ENCODE measurements at regions of chr1 and their contacts with region 1.

Region 1: GRCh38 chr1:58783993-58784757 is at the start of gene JUN:
- DNase-seq: peak; percentile 99
- H3K4me3 Mint-ChIP-seq: peak within 1 kb of the TSS; percentile 91
- H3K27ac Mint-ChIP-seq: peak within 1 kb of the TSS; percentile 98
- H3K4me1 Mint-ChIP-seq: peaks cover 21% of the 10 kb centered on the region
- H3K27me3 Mint-ChIP-seq: no peaks in the 10 kb centered on the region
- CTCF ChIP-seq: no peak
- total RNA-seq, gene JUN: 60.6 and 71.5 TPM in 2 replicates

Region 2: GRCh38 chr1:58539553-58539952 is 244.6 kb before region 1 on chr1:
- CTCF ChIA-PET with region 1: no interaction called
- POLR2A ChIA-PET with region 1: no interaction called
- intact Hi-C with region 1: no loop called
- DNase-seq: no peak
- H3K4me3 Mint-ChIP-seq: no peak overlapping the region
- H3K27ac Mint-ChIP-seq: no peak overlapping the region
- H3K4me1 Mint-ChIP-seq: no peaks in the 10 kb centered on the region
- H3K27me3 Mint-ChIP-seq: no peaks in the 10 kb centered on the region
- CTCF ChIP-seq: no peak

Region 3: DNA sequence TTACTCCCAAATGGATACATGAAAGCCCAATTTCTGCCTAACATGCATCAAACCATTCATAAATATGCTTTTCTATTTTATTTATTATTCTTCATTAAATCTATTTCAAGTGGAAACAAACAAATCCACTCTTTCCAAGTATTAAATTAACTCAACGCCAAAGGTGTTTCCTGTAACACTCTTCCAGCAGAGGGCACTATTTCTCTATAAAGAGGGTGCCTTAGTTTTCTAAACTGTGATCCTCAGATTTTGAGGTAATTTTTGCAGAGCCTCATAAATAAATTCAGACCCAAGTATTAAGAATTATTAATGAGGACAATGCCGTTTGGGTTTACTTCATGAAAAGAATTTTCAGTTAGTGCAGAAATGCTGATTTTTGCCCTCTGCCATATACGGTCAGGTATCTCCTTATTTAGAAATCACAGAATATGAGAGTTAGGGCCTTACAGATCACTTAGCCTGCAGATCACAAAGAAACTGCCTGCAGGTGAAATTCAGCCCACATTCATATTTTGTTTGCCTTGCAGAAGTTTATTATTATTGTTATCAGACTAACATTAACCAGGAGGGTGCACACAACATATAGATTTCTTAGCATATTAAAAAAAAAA is 44.2 kb before region 1 on chr1:
- CTCF ChIA-PET with region 1: interaction called, 7 read pairs
- POLR2A ChIA-PET with region 1: interaction called, 5 read pairs
- intact Hi-C with region 1: loop called (anchors 1 kb)
- DNase-seq: peak; percentile 69
- H3K4me3 Mint-ChIP-seq: no peak overlapping the region
- H3K27ac Mint-ChIP-seq: no peak overlapping the region
- H3K4me1 Mint-ChIP-seq: peaks cover 6% of the 10 kb centered on the region
- H3K27me3 Mint-ChIP-seq: no peaks in the 10 kb centered on the region
- CTCF ChIP-seq: peak; percentile 54

Region 4: DNA sequence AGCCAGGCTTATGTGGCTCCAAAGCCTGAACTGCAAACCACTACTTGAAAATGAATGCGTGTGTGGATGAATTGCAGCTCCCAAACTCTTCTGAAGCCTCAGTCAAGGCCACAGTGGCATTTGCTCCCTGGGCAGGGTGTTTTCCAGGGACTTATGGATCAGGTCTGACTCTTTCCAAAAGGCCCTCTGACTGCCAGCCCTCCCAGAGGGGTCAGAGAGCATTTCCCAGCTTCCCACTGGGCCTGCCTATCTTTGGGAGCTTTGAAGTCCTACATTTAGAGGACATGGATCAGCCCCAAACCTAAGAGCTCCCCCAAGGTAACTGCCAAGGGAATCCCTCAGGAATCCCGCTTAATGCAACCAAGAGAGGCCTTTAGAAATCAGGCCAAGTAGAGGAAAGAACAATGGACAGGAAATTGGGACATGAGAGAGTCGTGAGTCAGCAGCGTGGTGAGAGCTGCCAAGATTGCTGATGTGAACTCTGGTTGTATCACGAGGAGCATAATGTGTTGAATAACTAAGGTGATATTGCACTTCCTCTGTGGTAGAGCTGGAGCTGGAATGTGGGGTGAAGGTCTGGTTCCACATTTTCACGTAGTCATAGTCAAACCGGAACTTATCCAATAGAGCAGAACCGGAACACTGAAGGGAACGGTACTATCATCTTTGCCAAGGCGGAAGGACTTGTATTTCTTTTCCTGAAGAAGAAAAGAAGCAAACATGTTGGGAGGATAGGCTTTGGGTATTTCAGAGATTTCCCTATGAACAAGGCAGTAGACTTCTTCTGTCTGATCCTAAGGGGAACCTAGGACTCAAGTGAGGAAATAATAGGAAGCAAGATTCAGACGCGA is 99.1 kb after region 1 on chr1:
- CTCF ChIA-PET with region 1: no interaction called
- POLR2A ChIA-PET with region 1: interaction called, 16 read pairs
- intact Hi-C with region 1: no loop called
- DNase-seq: peak; percentile 99
- H3K4me3 Mint-ChIP-seq: no peak overlapping the region
- H3K27ac Mint-ChIP-seq: peak overlapping the region; percentile 8
- H3K4me1 Mint-ChIP-seq: peaks cover 44% of the 10 kb centered on the region
- H3K27me3 Mint-ChIP-seq: no peaks in the 10 kb centered on the region
- CTCF ChIP-seq: no peak

Region 5: DNA sequence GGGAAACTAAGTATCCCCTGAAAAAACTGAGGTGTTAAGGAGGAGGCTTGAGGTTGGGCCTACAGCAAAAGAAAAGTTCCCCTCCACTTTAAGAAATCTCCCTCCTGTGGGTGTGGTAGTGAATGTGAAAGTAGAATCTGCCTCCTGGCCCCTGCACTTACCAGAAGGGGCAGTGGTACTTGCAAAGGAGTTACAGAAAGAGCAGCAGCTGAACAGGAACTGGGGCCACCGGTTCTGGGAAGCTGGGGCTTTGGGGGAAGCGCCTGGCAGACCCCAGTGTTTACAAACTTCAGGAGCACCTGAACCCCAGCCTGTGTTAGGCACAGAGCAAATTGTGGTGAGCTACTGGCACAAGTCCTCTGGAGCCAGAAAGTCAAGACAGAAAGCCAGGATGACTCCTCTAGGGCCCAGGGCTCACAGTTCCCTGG is 262.6 kb after region 1 on chr1:
- CTCF ChIA-PET with region 1: no interaction called
- POLR2A ChIA-PET with region 1: interaction called, 3 read pairs
- intact Hi-C with region 1: loop called (anchors 10 kb)
- DNase-seq: no peak
- H3K4me3 Mint-ChIP-seq: no peak overlapping the region
- H3K27ac Mint-ChIP-seq: no peak overlapping the region
- H3K4me1 Mint-ChIP-seq: peaks cover 27% of the 10 kb centered on the region
- H3K27me3 Mint-ChIP-seq: no peaks in the 10 kb centered on the region
- CTCF ChIP-seq: no peak

Region 6: DNA sequence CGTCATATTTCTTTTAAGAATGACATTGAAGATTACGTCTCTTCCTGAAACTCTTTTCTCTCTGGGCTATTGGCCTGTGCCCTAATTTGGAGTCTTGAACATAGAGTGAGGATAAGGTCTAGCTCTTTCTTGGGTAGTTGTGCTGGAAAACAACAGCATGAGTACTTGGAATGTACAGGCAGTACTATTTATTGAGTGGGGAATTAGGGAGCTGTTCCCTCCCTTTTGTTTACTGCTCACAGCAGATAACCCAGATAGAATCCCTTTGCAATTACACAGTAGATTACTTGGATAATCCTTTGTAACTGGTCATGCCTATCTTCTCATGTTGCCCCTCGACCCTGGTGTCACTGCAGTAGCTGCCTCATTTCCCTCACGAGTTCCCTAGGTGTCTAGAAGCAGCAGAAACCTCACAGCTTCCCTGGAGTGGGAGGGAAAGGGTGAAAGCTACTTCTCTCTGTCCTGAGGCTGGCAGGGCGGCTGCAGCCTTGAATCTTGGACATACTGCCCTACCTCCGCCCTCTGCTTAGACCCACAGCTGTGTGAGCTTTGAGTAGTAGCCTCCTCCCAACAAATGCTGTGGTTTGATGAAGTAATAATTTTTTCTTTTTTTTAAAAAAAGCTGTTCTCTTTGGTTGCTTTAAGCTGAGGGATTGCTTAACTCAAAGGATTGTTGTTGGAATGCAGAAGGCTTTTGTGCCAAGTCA is 583.3 kb after region 1 on chr1:
- CTCF ChIA-PET with region 1: no interaction called
- POLR2A ChIA-PET with region 1: interaction called, 7 read pairs
- intact Hi-C with region 1: loop called (anchors 10 kb)
- DNase-seq: peak; percentile 75
- H3K4me3 Mint-ChIP-seq: peak overlapping the region; percentile 35
- H3K27ac Mint-ChIP-seq: peak overlapping the region; percentile 86
- H3K4me1 Mint-ChIP-seq: peaks cover 42% of the 10 kb centered on the region
- H3K27me3 Mint-ChIP-seq: no peaks in the 10 kb centered on the region
- CTCF ChIP-seq: no peak

Region 7: GRCh38 chr1:59699227-59699847 is 915.2 kb after region 1 on chr1:
- CTCF ChIA-PET with region 1: interaction called, 15 read pairs
- POLR2A ChIA-PET with region 1: interaction called, 26 read pairs
- intact Hi-C with region 1: loop called (anchors 1 kb)
- DNase-seq: peak; percentile 59
- H3K4me3 Mint-ChIP-seq: no peak overlapping the region
- H3K27ac Mint-ChIP-seq: peak overlapping the region; percentile 57
- H3K4me1 Mint-ChIP-seq: peaks cover 24% of the 10 kb centered on the region
- H3K27me3 Mint-ChIP-seq: no peaks in the 10 kb centered on the region
- CTCF ChIP-seq: peak; percentile 76